Activated CD4-positive, alpha-beta T cell treated with anti-CD3 and anti-CD28 coated beads, Interleukin-2, amount 10 ng/mL, durations not matched to agents 24 days and 14 days (primary cell): ENCODE measurements at regions of chr3 and their contacts with region 1.

Region 1: DNA sequence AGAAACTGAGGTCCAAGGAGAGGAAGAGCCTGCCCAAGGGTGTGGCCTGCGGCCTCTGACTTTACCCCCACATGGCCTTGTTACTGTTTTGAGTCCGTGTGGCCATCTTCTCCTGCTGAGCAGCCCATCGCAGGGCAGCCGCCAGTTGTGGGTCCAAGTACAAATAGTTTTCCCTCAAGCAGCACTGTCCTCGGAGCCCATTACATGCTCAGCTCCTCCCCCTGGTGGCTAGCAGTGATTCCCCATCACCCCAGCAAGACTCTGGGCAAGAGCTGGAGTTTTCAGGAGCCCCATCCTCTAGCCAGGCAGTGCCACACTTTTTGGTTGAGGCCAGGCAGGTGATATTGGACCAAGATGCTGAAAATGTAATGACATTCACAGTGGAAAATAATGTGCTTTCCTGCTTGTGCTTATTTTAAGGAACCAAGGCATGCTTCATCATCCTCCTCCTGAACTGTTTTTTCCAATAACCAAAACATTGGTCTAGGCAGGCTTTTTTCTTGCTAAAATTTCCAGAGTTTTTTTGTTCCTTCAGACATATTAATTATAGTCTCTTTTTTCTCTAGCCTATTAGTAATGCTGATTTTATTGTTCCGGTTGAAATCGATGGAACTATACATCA is 23.2 kb upstream of the VILL start:
- DNase-seq: peak; percentile 90
- H3K4me3 Mint-ChIP-seq: no peak overlapping the region
- H3K27ac Mint-ChIP-seq: no peak overlapping the region
- H3K4me1 Mint-ChIP-seq: no peaks in the 10 kb centered on the region
- H3K27me3 Mint-ChIP-seq: peaks cover 2% of the 10 kb centered on the region

Region 2: GRCh38 chr3:37855363-37855970 is 111.9 kb before region 1 on chr3:
- intact Hi-C with region 1: loop called (anchors 1 kb)
- DNase-seq: peak; percentile 93
- H3K4me3 Mint-ChIP-seq: no peak overlapping the region
- H3K27ac Mint-ChIP-seq: no peak overlapping the region
- H3K4me1 Mint-ChIP-seq: peaks cover 5% of the 10 kb centered on the region
- H3K27me3 Mint-ChIP-seq: no peaks in the 10 kb centered on the region

Region 3: DNA sequence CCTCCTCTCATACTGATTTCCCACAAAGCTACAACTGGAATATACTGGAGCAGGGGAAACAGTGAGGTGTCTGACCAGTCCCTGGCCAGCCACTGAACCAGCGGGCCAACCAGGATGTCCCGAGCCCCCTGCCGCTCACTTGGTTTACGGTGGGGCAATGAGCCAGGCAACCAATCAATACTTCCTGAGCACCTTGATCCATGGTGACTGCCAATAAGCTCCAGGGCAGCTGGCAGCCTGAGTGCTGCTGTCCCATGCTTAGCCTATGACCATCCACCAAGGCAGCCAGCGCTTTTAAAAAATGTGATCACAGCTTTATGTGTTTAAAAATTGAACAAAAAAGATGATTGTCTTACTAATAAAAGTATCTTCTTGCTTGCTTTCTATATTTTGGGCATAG is 844.5 kb after region 1 on chr3:
- intact Hi-C with region 1: no loop called
- DNase-seq: no peak
- H3K4me3 Mint-ChIP-seq: no peak overlapping the region
- H3K27ac Mint-ChIP-seq: no peak overlapping the region
- H3K4me1 Mint-ChIP-seq: no peaks in the 10 kb centered on the region
- H3K27me3 Mint-ChIP-seq: no peaks in the 10 kb centered on the region